ENCODE measurements at regions of chr1 and their contacts with region 1.

Region 1: DNA sequence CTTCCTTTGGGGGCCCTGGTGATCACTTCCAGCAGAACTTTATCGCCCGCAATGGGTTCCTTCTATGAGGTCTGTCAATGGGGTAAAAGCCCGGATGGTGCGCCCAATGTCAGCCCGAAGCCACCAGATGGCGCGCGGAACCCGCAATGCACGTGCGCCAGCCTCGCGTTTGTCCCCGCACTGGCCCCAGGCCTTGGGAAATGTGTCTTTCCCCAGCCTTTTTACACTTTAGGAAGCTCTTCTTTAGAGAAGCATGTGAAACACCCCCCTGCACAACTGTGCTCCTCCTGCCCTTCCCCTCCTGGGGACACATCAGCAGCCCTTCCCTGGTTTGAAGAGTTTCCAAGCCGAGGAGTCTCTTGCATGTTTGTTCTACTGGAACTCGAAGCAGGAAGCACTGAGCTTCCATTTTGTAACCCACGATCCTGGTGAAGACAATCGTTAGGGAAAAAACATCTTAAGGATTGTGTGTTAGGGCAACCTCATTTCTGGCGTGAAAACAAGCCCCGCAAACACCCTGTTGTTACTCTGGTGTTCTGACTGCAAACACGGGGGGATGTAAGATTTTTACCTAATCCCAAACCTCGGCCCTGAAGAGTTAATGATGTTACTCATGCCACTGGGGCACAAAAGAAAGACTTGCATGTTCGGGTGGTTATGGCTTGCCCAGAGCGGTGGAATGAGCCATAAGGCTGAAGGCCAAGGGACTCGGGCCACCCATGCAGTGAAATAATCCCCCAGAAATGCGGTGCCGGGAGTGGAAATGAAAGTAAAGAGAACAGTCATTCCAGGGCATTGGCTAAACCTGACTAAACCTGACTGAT is 20.4 kb upstream of the TARBP1 start:
- DNase-seq: peak; percentile 88
- ATAC-seq: peak; percentile 98
- H3K4me3 Mint-ChIP-seq: no peak overlapping the region
- H3K27ac Mint-ChIP-seq: peak overlapping the region; percentile 77
- H3K4me1 Mint-ChIP-seq: peaks cover 41% of the 10 kb centered on the region
- H3K27me3 Mint-ChIP-seq: peaks cover 2% of the 10 kb centered on the region

Region 2: GRCh38 chr1:234486498-234487448 is 12.6 kb before region 1 on chr1:
- CTCF ChIA-PET with region 1: interaction called, 27 read pairs
- POLR2A ChIA-PET with region 1: interaction called, 3 read pairs
- DNase-seq: peak; percentile 59
- ATAC-seq: peak; percentile 66
- H3K4me3 Mint-ChIP-seq: no peak overlapping the region
- H3K27ac Mint-ChIP-seq: no peak overlapping the region
- H3K4me1 Mint-ChIP-seq: peaks cover 31% of the 10 kb centered on the region
- H3K27me3 Mint-ChIP-seq: peaks cover 20% of the 10 kb centered on the region

Region 3: DNA sequence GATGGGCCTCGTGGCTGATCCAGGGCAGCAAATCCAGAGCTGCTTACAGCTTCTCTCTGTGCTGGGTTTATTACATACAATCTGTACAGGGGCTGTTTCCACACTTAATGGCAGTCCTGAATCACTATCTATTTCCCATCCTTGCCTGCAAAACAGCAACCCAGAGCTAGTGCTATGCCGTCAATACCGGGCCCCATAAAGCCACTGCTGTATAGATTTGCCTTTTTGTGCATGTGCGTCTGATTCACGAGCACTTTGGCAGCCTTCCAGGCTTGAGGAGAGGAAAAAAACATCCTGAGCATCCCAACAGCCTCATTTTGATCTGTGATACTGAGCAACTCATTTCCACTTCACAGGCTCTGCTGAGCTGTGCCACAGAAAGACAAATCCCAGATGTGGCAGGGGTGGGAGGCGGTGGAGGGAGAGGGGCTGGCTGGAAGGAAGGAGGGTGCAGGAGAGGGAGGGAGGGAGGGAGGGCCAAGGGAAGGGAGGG is 44.8 kb after region 1 on chr1:
- CTCF ChIA-PET with region 1: interaction called, 21 read pairs
- POLR2A ChIA-PET with region 1: no interaction called
- DNase-seq: peak; percentile 37
- ATAC-seq: peak; percentile 70
- H3K4me3 Mint-ChIP-seq: peak overlapping the region; percentile 1
- H3K27ac Mint-ChIP-seq: peak overlapping the region; percentile 74
- H3K4me1 Mint-ChIP-seq: peaks cover 29% of the 10 kb centered on the region
- H3K27me3 Mint-ChIP-seq: no peaks in the 10 kb centered on the region

Region 4: GRCh38 chr1:234631721-234632125 is 132.4 kb after region 1 on chr1:
- CTCF ChIA-PET with region 1: no interaction called
- POLR2A ChIA-PET with region 1: no interaction called
- DNase-seq: no peak
- ATAC-seq: no peak
- H3K4me3 Mint-ChIP-seq: no peak overlapping the region
- H3K27ac Mint-ChIP-seq: no peak overlapping the region
- H3K4me1 Mint-ChIP-seq: no peaks in the 10 kb centered on the region
- H3K27me3 Mint-ChIP-seq: peaks cover 6% of the 10 kb centered on the region

Region 5: GRCh38 chr1:234722904-234723720 is 223.8 kb after region 1 on chr1:
- CTCF ChIA-PET with region 1: interaction called, 10 read pairs
- POLR2A ChIA-PET with region 1: no interaction called
- DNase-seq: peak; percentile 47
- ATAC-seq: no peak
- H3K4me3 Mint-ChIP-seq: peak overlapping the region; percentile 66
- H3K27ac Mint-ChIP-seq: peak overlapping the region; percentile 93
- H3K4me1 Mint-ChIP-seq: peaks cover 70% of the 10 kb centered on the region
- H3K27me3 Mint-ChIP-seq: no peaks in the 10 kb centered on the region

Region 6: GRCh38 chr1:235093696-235094592 is 594.6 kb after region 1 on chr1:
- CTCF ChIA-PET with region 1: interaction called, 18 read pairs
- POLR2A ChIA-PET with region 1: no interaction called
- DNase-seq: peak; percentile 89
- ATAC-seq: peak; percentile 92
- H3K4me3 Mint-ChIP-seq: no peak overlapping the region
- H3K27ac Mint-ChIP-seq: peak overlapping the region; percentile 60
- H3K4me1 Mint-ChIP-seq: peaks cover 19% of the 10 kb centered on the region
- H3K27me3 Mint-ChIP-seq: peaks cover 5% of the 10 kb centered on the region